ENCODE measurements at regions of chr4 and their contacts with region 1.

Region 1: GRCh38 chr4:3480528-3481112 is 17.5 kb downstream of the DOK7 start:
- DNase-seq: peak; percentile 75
- H3K4me3 Mint-ChIP-seq: no peak overlapping the region
- H3K27ac Mint-ChIP-seq: peak overlapping the region; percentile 25
- H3K4me1 Mint-ChIP-seq: no peaks in the 10 kb centered on the region
- H3K27me3 Mint-ChIP-seq: peaks cover 12% of the 10 kb centered on the region

Region 2: GRCh38 chr4:3106339-3107186 is 374.1 kb before region 1 on chr4:
- CTCF ChIA-PET with region 1: interaction called, 10 read pairs
- POLR2A ChIA-PET with region 1: no interaction called
- DNase-seq: peak; percentile 83
- H3K4me3 Mint-ChIP-seq: no peak overlapping the region
- H3K27ac Mint-ChIP-seq: peak overlapping the region; percentile 37
- H3K4me1 Mint-ChIP-seq: peaks cover 8% of the 10 kb centered on the region
- H3K27me3 Mint-ChIP-seq: no peaks in the 10 kb centered on the region